ENCODE measurements at regions of chrX and their contacts with region 1.

Region 1: DNA sequence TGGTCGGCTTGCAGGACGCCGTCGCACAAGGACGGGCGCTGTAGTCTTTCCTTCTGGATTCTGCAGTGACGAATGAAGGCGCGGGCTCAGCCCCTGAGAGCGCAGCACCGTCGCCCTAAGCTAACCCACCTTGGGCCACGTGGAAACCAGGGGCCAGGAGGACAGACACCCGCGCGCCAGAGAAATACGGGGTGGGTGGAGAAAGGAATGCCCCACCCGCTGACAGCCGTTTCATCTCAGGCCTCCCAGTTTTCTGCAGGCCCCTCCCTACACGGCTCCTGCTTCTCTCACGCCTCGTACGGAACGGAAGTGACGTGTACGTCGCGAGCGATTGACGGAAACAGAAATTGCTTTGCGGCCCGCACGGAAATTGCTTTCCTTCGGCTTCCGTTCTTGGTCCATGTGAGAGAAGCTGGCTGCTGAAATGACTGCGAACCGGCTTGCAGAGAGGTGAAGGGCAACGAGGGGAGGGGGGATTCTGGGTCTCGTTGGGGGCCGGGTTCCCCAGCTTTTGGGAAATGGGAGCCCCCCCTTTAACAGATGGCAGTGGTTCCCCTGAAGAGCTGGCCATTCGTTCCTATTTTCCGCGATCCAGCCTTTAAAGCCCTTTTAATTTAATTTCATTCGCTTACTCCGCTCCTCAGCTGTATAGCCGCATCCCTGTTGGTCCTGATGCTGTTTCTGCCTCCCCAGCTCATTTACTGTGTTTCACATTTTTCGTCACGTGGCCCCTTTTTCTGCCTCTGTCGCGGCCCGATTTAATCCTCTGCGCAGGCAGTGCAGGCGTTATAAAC is at the start of gene UTP14A:
- DNase-seq: peak; percentile 92
- ATAC-seq: peak; percentile 99
- H3K4me3 Mint-ChIP-seq: peak within 1 kb of the TSS; percentile 93
- H3K27ac Mint-ChIP-seq: peak within 1 kb of the TSS; percentile 94
- H3K4me1 Mint-ChIP-seq: peaks cover 25% of the 10 kb centered on the region
- H3K27me3 Mint-ChIP-seq: no peaks in the 10 kb centered on the region
- total RNA-seq, gene UTP14A: 28.1 to 29.7 TPM

Region 2: DNA sequence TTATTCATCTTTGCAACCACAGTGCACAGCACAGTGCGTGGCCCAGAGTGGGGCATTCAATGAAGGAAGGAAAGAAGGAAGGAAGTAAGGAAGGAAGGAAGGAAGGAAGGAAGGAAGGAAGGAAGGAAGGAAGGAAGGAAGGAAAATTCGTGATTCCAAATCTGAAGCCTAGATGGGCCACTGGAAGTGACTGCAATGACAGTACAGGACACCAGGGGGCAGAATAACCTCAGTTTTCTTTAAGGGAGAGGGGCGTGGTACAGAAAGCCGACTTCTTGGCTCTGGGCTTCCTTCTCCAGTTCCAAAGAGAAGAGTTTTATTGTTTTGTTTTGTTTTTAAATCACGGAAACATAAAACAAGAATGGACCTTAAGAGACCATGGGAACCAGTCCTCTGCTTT is 299.1 kb before region 1 on chrX:
- CTCF ChIA-PET with region 1: interaction called, 10 read pairs
- POLR2A ChIA-PET with region 1: interaction called, 3 read pairs
- DNase-seq: peak; percentile 69
- ATAC-seq: peak; percentile 48
- H3K4me3 Mint-ChIP-seq: no peak overlapping the region
- H3K27ac Mint-ChIP-seq: no peak overlapping the region
- H3K4me1 Mint-ChIP-seq: peaks cover 22% of the 10 kb centered on the region
- H3K27me3 Mint-ChIP-seq: peaks cover 7% of the 10 kb centered on the region

Region 3: GRCh38 chrX:129925305-129926092 is 19.5 kb after region 1 on chrX:
- CTCF ChIA-PET with region 1: interaction called, 20 read pairs
- POLR2A ChIA-PET with region 1: no interaction called
- DNase-seq: peak; percentile 80
- ATAC-seq: peak; percentile 75
- H3K4me3 Mint-ChIP-seq: no peak overlapping the region
- H3K27ac Mint-ChIP-seq: no peak overlapping the region
- H3K4me1 Mint-ChIP-seq: peaks cover 4% of the 10 kb centered on the region
- H3K27me3 Mint-ChIP-seq: no peaks in the 10 kb centered on the region

Measured in activated CD8-positive, alpha-beta T cell treated with anti-CD3 and anti-CD28 coated beads, Interleukin-2, amount 10 ng/mL, durations not matched to agents 7 days and 5 days (primary cell).